ENCODE measurements at regions of chr12 and their contacts with region 1.

Region 1: DNA sequence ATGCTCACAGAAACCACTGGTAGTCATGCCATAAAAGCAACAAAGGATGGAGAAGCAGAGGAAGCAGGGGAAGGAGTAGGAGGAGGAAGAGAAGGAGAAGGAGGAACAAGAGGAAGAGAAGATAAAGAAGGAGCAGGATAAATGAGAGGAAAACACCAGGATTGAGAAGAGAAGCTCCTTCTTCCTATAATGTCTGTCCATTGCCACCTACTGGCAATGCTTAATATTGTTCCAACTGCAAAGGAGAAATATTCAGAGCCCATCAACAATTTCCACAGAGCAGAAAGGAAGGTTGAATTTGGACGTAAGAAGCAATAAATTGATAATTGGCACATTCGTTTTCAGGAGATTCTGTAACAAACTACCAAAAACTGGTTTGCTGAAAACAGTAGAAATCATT is 898.4 kb downstream of the SLC16A7 start:
- DNase-seq: no peak
- ATAC-seq: no peak

Region 2: DNA sequence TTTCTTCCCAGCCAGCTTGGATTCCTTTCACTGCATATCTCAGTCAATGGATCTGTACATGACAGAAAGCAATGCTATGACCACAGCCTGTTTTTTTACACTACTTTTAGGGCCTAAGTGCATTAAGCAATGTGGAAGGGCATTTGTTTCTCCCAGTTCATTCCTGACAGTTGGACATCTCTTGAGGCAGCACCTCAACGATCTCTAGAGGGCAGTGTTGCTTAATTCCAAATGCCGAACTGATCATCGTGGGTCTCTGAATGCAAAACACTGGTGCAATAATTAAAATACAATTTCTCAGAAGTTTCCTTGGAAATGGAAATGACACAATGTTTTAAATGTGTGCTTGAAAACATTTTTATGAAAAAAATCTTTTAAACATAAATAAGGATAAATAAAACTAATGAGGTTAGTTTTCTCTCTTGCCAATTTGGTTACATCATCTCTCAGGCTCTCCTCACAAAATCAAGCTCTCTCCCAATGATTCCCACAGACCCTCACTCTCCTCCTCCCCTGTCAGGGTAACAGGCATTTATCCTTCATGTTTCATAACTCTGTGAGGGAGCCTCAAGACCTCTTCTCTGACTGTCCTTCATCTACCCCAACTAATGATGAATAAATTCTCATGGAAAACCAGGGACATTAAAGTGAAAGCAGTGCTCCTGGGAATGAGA is 1090.8 kb before region 1 on chr12:
- intact Hi-C with region 1: loop called (anchors 10 kb)
- DNase-seq: peak; percentile 25
- ATAC-seq: peak; percentile 88

Region 3: GRCh38 chr12:60849723-60850122 is 355.5 kb after region 1 on chr12:
- intact Hi-C with region 1: no loop called
- DNase-seq: no peak
- ATAC-seq: no peak

Measured in Right ventricle myocardium superior (tissue), 1 donor.